Activated T-helper 1 cell treated with anti-CD3 and anti-CD28 coated beads, Interleukin-12 subunit alpha, Interleukin-12 subunit beta, Interleukin-2, Interleukin-4 antibody, amounts not matched to agents 30 ng/mL and 10 ng/mL and 1 ng/mL, durations not matched to agents 14 hours and 24 hours and 36 hours (primary cell): ENCODE measurements at regions of chr15 and their contacts with region 1.

Region 1: DNA sequence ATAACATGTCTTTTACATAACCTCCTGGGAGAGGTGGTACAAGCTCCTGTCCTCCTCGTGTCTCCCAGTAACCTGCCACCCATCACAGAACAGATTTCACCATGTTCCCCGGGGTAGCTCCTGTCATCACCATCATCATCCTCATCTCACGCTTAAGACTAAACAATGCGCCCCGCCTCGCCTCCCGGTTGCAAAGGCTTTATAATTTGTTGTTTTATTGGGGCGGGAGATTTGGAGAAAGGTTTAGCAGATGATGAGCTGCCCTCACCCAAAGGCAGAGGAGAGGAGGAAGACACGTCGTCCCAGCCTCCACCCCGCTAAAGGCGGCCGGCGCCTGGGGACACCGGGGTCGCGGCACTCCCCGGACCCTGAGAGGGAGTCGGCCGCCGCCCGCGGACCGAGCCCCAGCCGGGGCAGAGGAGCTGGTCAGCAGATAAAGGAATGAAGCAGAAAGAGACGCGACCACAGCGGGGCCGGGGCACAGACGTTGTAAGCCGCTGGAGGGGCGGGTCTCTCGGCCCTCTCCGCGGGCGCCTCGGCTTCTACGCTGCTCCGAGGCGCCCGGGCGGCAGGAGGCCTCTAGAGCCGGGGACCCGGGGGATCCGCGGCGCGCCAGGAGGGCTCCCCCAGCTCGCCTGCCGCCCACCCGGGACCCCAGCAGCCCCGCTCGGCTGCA is 589 bp downstream of the HERC1 start:
- DNase-seq: peak; percentile 25
- H3K4me3 Mint-ChIP-seq: peak overlapping the region; percentile 91
- H3K27ac Mint-ChIP-seq: peak overlapping the region; percentile 96
- H3K4me1 Mint-ChIP-seq: peaks cover 48% of the 10 kb centered on the region
- H3K27me3 Mint-ChIP-seq: peaks cover 5% of the 10 kb centered on the region

Region 2: DNA sequence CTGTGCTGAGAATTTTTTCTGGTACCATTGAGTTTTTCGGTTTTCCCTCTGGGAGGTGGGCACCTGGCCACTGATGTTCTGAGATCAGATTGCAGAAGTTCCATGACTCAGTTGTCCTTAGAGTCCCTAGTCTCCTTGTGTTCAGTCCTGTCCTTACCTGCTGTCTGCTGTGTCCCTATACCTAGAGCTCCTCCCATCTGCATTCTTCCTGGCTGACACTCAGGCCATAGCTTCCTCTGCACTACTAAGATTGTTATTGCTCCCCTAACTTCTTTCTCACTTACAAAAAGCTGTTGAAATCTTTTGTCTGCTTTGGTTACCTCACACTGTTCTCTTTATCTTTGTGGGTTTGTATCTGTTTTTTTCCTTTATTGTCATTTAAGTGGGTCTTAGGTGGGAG is 315.5 kb before region 1 on chr15:
- intact Hi-C with region 1: no loop called
- DNase-seq: no peak
- H3K4me3 Mint-ChIP-seq: no peak overlapping the region
- H3K27ac Mint-ChIP-seq: no peak overlapping the region
- H3K4me1 Mint-ChIP-seq: peaks cover 48% of the 10 kb centered on the region
- H3K27me3 Mint-ChIP-seq: no peaks in the 10 kb centered on the region

Region 3: DNA sequence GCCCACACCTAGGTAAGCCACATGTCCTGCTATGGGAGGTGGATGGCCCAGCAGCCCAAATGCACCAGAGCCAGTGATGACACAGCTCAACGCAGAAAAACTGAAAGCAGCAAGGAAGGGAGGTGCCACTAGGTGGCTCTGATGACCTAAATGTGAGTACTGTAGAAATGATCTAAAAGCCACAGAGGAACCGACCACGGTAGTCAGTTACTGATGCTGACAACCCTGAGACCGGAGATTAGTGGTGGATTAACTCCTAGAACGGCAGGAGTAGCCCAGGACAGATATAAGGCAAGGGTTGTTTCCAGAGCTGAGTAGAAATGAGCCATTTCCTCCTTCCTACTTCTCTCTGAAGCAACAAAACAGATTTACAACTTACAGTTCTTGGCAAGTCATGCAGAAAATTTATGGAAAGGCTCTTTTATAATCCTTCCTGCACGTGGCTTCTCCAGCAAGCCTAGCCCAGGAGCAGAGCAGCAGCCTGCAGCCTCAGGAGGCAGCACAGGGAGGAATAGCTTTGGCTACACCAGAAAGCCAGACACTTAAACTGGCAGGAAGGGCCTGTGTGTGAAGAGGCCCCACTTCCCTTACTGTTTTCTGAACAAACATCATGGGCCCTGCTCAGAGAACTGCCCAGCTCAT is 222.8 kb before region 1 on chr15:
- intact Hi-C with region 1: loop called (anchors 5 kb)
- DNase-seq: peak; percentile 74
- H3K4me3 Mint-ChIP-seq: peak overlapping the region; percentile 38
- H3K27ac Mint-ChIP-seq: peak overlapping the region; percentile 89
- H3K4me1 Mint-ChIP-seq: peaks cover 31% of the 10 kb centered on the region
- H3K27me3 Mint-ChIP-seq: no peaks in the 10 kb centered on the region

Region 4: DNA sequence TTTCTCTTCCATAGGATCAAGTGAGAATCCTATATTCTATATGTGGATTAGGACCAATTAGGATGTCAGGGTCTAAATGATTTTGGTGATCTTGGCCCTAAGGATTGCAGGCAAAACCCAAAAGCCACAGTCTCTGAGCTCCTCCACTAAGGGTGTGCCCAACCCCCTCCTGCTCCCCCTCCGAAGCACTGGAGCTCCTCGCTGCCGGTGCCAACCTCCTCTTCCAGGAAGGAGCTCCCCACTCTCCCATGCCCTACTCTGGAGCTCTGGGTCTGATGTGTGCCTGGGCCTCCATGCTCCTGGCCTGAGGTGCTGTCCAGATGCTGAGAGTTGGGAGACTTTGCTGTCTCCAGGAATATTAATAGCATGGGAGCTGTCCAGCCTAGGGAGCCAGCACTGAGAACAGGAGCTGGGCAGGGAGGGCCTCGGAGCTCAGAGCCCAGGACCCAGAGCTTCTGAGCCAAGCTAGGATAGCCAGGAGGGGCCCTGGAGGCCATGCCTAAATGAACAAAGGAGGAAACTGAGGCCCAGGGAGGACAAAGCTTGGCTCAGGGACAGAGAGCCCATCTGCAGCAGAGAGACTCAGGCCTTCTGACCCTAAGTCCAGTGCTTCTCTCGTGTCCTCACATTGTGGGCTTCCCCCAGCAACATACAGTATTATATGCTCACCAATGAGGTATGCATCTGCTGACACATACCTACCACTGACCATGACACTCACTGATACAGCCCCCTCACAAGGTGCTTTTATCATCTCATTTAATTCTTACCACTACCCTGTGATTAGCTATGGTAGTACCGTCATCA is 37.4 kb after region 1 on chr15:
- intact Hi-C with region 1: loop called (anchors 1 kb)
- DNase-seq: no peak
- H3K4me3 Mint-ChIP-seq: no peak overlapping the region
- H3K27ac Mint-ChIP-seq: no peak overlapping the region
- H3K4me1 Mint-ChIP-seq: peaks cover 31% of the 10 kb centered on the region
- H3K27me3 Mint-ChIP-seq: no peaks in the 10 kb centered on the region

Region 5: GRCh38 chr15:63945007-63945788 is 112.0 kb after region 1 on chr15:
- intact Hi-C with region 1: loop called (anchors 2 kb)
- DNase-seq: peak; percentile 51
- H3K4me3 Mint-ChIP-seq: no peak overlapping the region
- H3K27ac Mint-ChIP-seq: peak overlapping the region; percentile 52
- H3K4me1 Mint-ChIP-seq: peaks cover 47% of the 10 kb centered on the region
- H3K27me3 Mint-ChIP-seq: no peaks in the 10 kb centered on the region

Region 6: GRCh38 chr15:64046347-64047153 is 213.4 kb after region 1 on chr15 and contains the start of gene DAPK2:
- intact Hi-C with region 1: loop called (anchors 1 kb)
- DNase-seq: peak; percentile 64
- H3K4me3 Mint-ChIP-seq: peak within 1 kb of the TSS; percentile 81
- H3K27ac Mint-ChIP-seq: peak within 1 kb of the TSS; percentile 49
- H3K4me1 Mint-ChIP-seq: peaks cover 36% of the 10 kb centered on the region
- H3K27me3 Mint-ChIP-seq: peaks cover 26% of the 10 kb centered on the region
- total RNA-seq, gene DAPK2: 8.6 and 8.7 TPM in 2 replicates

Region 7: GRCh38 chr15:64381000-64381752 is 548.0 kb after region 1 on chr15 and contains the start of gene PCLAF:
- intact Hi-C with region 1: loop called (anchors 5 kb)
- DNase-seq: peak; percentile 93
- H3K4me3 Mint-ChIP-seq: peak within 1 kb of the TSS; percentile 94
- H3K27ac Mint-ChIP-seq: peak within 1 kb of the TSS; percentile 92
- H3K4me1 Mint-ChIP-seq: peaks cover 16% of the 10 kb centered on the region
- H3K27me3 Mint-ChIP-seq: no peaks in the 10 kb centered on the region
- total RNA-seq, gene PCLAF: 58.6 and 69.8 TPM in 2 replicates